Activated CD8-positive, alpha-beta T cell treated with anti-CD3 and anti-CD28 coated beads for 36 hours (primary cell): ENCODE measurements at regions of chr19 and their contacts with region 1.

Region 1: DNA sequence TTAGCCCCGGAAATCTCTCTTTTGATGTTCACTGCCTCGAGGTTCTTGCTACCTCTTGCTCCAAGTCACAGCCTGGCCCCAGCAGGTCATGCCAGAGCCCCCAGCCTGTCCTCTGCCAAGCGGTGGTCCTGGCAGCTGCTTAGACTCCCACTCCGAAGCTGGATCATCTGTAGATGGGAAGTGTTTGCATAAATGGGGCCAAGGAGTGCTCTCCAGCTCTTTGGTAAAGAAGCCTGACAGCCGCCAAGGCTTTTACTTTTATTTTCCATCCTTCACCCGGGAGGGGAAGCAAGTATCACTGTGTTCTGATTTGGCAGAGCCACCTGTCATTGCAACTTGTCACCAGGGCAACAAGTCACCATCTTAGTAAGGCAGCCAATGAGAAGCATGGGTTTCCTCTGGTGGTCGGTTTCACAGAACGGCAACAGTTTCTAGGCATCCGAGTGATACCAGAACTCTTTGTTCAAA is 10.6 kb upstream of the RETN start:
- DNase-seq: peak; percentile 78
- ATAC-seq: peak; percentile 80
- H3K4me3 Mint-ChIP-seq: peak overlapping the region; percentile 68
- H3K27ac Mint-ChIP-seq: peak overlapping the region; percentile 78
- H3K4me1 Mint-ChIP-seq: peaks cover 30% of the 10 kb centered on the region
- H3K27me3 Mint-ChIP-seq: peaks cover 2% of the 10 kb centered on the region
- CTCF ChIP-seq: no peak

Region 2: DNA sequence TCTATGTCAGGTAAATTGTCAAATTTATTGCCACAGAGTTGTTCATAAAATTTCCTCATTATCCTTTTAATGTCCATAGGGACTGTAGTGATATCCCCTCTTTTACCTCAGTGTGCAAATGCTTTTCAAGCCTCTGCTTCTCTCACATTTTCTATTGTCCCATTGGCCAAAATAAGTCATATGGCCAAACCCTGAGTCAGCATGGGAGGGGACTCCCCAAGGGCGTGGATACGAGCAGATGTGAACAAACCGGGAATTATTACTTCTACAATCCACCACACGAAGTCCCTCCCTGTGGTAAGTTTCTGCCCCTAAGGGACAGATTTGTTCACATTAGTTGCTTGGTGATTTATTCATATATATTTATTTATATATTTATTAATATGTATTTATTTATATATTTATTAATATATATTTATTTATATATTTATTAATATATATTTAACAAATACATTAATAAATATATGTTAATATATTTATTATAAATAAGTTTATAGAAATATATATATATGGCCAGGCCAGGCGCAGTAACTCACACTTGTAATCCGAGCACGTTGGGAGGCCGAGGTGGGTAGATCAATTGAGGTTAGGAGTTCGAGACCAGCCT is 82.7 kb before region 1 on chr19:
- CTCF ChIA-PET with region 1: no interaction called
- POLR2A ChIA-PET with region 1: no interaction called
- intact Hi-C with region 1: no loop called
- DNase-seq: peak; percentile 35
- ATAC-seq: peak; percentile 42
- H3K4me3 Mint-ChIP-seq: no peak overlapping the region
- H3K27ac Mint-ChIP-seq: no peak overlapping the region
- H3K4me1 Mint-ChIP-seq: no peaks in the 10 kb centered on the region
- H3K27me3 Mint-ChIP-seq: peaks cover 6% of the 10 kb centered on the region
- CTCF ChIP-seq: no peak

Region 3: DNA sequence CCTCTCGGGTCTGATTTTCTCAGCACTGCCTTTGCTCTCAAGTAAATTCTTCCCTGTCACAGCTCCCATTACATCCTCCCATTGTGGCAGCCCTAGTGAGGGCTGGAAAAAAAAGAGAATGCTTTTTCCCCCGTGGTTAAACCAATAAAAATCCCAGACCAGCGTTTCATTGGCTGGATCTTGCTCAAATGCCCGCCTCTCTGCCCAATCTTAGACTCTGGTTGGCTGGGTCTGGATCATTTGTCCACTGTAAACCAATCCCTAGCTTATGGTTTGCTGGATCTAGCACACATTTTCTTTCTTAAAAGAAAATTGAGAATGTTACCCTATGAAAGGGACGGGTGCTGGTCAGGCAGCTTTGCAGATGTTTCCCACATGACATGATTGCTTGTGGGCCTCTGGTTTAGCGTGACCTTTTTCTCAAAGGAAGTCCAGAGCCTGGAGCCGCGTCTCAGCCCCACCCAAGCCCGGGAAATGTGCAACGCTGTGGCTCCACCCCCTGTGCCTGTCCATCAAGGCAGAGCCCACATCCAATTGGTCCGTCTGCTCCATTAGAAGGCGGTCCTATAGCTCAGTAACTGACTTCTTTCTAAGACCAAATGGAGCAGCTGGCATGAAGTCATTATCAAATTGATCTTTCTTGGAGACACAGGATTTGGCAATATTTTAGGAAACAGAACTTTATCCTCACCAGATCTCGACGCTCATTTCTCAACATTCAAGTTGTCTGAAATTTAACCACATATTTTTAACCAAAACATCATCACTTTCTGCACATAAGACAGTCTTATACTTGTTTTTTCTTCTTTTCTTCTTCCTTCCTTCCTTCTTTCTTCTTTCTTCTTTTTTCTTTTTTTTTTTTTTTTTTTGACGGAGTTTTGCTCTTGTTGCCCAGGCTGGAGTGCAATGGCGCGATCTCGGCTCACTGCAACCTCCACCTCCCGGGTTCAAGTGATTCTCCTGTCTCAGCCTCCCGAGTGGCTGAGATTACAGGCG is 16.1 kb after region 1 on chr19:
- CTCF ChIA-PET with region 1: interaction called, 6 read pairs
- POLR2A ChIA-PET with region 1: interaction called, 11 read pairs
- intact Hi-C with region 1: no loop called
- DNase-seq: peak; percentile 57
- ATAC-seq: peak; percentile 45
- H3K4me3 Mint-ChIP-seq: no peak overlapping the region
- H3K27ac Mint-ChIP-seq: no peak overlapping the region
- H3K4me1 Mint-ChIP-seq: peaks cover 43% of the 10 kb centered on the region
- H3K27me3 Mint-ChIP-seq: peaks cover 53% of the 10 kb centered on the region
- CTCF ChIP-seq: no peak

Region 4: DNA sequence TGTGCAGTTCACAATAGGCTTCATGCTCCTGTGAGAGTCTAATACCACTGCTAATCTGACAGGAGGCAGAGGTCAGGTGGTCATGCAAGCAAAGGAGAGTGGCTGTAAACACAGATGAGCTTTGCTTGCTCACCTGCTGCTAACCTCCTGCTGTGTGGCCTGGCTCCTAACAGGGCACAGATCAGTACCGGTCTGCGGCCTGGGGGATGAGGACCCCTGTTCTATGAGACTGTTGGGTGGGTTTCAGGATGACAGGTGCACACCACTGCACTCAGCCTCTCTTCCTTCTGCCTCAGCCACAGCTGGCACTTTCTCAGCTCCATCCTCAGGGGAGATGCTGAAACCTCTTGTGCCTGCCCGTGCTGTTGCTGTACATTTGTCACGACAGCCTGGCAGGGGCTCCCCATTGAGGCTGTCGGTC is 64.0 kb after region 1 on chr19:
- CTCF ChIA-PET with region 1: no interaction called
- POLR2A ChIA-PET with region 1: no interaction called
- intact Hi-C with region 1: no loop called
- DNase-seq: no peak
- ATAC-seq: no peak
- H3K4me3 Mint-ChIP-seq: no peak overlapping the region
- H3K27ac Mint-ChIP-seq: no peak overlapping the region
- H3K4me1 Mint-ChIP-seq: peaks cover 7% of the 10 kb centered on the region
- H3K27me3 Mint-ChIP-seq: peaks cover 4% of the 10 kb centered on the region
- CTCF ChIP-seq: no peak